Aorta (tissue), 5 donors: ENCODE measurements at regions of chr22 and their contacts with region 1.

Region 1: GRCh38 chr22:31080848-31081649 is at the start of gene SMTN:
- DNase-seq: peak; percentile 94 to 98
- ATAC-seq: peak; percentile 87
- H3K4me3 ChIP-seq: peak within 1 kb of the TSS; percentile 87 to 89
- H3K27ac ChIP-seq: peak within 1 kb of the TSS; percentile 34 to 93
- H3K4me1 ChIP-seq: no peaks in the 10 kb centered on the region
- H3K27me3 ChIP-seq: no peaks in the 10 kb centered on the region
- total RNA-seq, gene SMTN: 588 to 1,240 TPM

Region 2: GRCh38 chr22:30947816-30948454 is 133.1 kb before region 1 on chr22:
- intact Hi-C with region 1: loop called (anchors 1 kb)
- DNase-seq: no peak
- ATAC-seq: peak; percentile 83
- H3K4me3 ChIP-seq: no peak overlapping the region
- H3K27ac ChIP-seq: peak overlapping the region; percentile 72 to 74
- H3K4me1 ChIP-seq: peaks cover 5 to 8% of the 10 kb centered on the region in 2 donors
- H3K27me3 ChIP-seq: no peaks in the 10 kb centered on the region

Region 3: DNA sequence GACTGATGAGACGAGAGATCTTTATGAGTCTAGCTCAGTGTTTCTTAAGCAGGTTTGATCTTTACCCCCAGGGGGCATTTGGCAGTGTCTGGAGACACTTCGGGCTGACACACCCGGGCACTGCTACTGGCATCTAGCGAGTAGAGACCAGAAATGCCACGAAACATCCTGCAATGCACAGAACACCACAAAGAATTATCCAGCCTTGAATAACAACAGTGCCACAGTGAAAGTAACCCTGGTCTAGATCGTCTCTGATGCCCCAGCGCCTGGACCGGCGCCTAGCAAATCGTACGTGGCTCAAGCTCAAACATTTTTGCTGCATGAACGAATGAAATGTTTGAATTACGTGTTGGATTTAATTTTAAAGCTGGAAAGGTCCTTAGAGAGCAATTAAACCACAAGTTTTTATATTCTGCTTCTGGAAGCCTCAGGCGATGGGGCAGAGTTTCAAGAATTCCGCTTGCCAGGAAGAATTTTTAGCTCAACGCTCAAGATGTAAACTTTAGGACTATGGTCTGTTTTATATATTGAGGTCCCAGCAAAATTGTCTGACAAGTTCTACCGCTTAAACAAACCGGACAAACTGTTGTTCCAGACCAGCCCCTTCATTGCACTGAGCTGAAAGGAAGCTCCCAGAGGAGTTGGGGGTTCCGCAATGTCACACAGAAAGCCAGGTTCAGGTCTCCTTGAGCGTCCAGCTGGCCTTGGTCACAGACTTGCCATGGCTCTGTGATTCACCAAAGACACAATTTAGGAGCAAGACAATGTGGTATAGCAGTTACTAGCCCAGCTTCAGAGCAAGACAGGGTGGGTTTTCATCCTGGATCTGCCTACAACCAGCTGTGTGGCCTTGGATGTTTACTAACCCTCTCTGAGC is 44.1 kb before region 1 on chr22:
- intact Hi-C with region 1: loop called in 1 of 2 experiments (anchors 5 kb)
- DNase-seq: peak; percentile 74 to 85
- ATAC-seq: peak; percentile 76
- H3K4me3 ChIP-seq: peak overlapping the region in 1 of 2 donors; percentile 9
- H3K27ac ChIP-seq: peak overlapping the region; percentile 31 to 89
- H3K4me1 ChIP-seq: peaks cover 0 to 3% of the 10 kb centered on the region in 2 donors
- H3K27me3 ChIP-seq: no peaks in the 10 kb centered on the region

Region 4: DNA sequence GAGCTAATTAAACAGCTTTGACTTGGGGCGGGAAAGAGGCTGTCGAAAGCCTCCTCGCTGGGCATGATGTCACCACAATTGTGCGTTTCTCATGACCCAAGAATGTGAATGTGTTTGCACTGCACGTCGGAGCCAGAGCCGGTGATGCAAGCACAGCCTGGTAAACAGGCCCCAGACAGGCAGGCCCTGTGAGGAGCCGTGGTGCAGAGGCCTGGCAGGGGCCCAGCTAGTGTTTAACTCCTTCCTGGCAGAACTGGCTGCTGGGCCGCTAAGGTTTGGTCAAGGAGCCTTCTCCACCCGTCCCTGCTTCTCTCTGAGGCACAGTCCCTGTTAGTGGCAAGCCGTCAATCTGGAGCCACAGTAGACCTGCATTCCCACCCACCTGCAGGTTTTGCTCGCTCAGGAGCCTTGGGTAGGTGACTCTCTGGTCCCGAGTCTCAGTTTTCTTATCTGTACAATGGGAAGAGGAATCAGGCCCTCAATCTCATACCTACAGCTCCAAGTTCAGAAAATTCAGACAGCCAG is 25.4 kb before region 1 on chr22:
- intact Hi-C with region 1: loop called in 1 of 2 experiments (anchors 2 kb)
- DNase-seq: peak; percentile 94 to 95
- ATAC-seq: peak; percentile 96
- H3K4me3 ChIP-seq: no peak overlapping the region
- H3K27ac ChIP-seq: peak overlapping the region; percentile 48 to 68
- H3K4me1 ChIP-seq: no peaks in the 10 kb centered on the region
- H3K27me3 ChIP-seq: no peaks in the 10 kb centered on the region